ENCODE measurements at regions of chr17 and their contacts with region 1.

Region 1: GRCh38 chr17:9217151-9218056 is 196.1 kb downstream of the NTN1 start:
- DNase-seq: peak; percentile 62
- ATAC-seq: peak; percentile 91
- H3K4me3 ChIP-seq: no peak overlapping the region
- H3K27ac ChIP-seq: peak overlapping the region; percentile 79; the same call in 1 of the 2 replicates
- H3K4me1 ChIP-seq: peaks cover 6% of the 10 kb centered on the region; the same call in 1 of the 2 replicates
- H3K27me3 ChIP-seq: no peaks in the 10 kb centered on the region; the same call in 1 of the 2 replicates
- CTCF ChIP-seq: no peak
- POLR2A ChIP-seq: no peak
- RAD21 ChIP-seq: no peak

Region 2: DNA sequence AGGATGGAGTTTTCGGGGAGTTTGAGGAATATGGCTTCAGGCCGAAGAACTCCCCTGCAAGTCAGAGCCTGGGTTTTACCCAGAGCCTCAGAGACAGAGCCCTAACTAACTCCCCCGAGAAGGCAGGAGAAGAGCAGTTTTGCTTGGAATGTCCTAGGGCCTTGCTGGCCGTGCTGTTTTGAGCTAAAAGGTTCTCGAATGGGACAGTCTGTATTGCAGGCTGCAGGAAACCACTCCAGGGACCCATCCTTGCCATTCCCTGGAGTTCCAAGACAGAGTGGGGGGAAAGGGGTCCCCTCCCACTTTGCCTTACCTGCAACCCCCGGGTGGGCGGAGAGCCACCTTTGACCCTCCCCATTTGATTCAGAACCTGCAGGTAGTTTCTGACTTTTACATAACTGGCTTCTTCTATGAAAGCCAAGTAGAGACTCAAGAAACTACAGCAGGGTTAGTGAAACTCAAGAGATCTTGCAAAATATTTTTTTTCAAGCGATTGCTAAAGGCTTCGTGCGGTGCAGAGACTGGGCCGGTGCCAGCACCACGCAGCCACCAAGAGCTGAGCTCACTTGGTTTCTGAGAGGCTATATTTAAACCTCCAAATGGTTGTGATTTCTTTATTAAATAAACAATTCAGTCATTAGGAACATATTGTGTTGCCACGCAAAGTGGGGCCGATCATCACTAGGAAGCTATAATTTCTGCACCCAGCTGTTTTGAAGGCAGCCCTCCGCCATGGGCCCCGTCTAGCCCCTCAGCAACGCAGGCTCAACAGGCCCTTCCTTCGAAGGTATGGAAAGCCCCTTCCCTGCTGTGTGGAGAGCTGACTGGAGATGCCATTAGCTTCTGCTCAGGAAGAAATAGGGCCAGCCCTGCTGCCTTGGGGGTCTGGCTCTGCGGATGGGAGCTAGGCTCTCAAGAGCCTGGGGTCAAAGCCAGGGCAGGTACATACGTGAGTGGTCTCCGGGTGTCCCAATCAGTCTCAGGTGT is 27.0 kb after region 1 on chr17:
- CTCF ChIA-PET with region 1: no interaction called
- POLR2A ChIA-PET with region 1: no interaction called
- dilution Hi-C with region 1: no loop called
- in situ Hi-C with region 1: no loop called
- intact Hi-C with region 1: no loop called
- DNase-seq: peak; percentile 88
- ATAC-seq: peak; percentile 22
- H3K4me3 ChIP-seq: no peak overlapping the region
- H3K27ac ChIP-seq: peak overlapping the region; percentile 65; the same call in 1 of the 2 replicates
- H3K4me1 ChIP-seq: peaks cover 25% of the 10 kb centered on the region
- H3K27me3 ChIP-seq: no peaks in the 10 kb centered on the region
- CTCF ChIP-seq: no peak
- POLR2A ChIP-seq: no peak
- RAD21 ChIP-seq: no peak

Region 3: GRCh38 chr17:9273428-9274391 is 56.3 kb after region 1 on chr17:
- CTCF ChIA-PET with region 1: no interaction called
- POLR2A ChIA-PET with region 1: no interaction called
- dilution Hi-C with region 1: no loop called
- in situ Hi-C with region 1: no loop called
- intact Hi-C with region 1: loop called (anchors 10 kb)
- DNase-seq: peak; percentile 52
- ATAC-seq: peak; percentile 35
- H3K4me3 ChIP-seq: no peak overlapping the region
- H3K27ac ChIP-seq: no peak overlapping the region
- H3K4me1 ChIP-seq: peaks cover 2% of the 10 kb centered on the region; the same call in 1 of the 2 replicates
- H3K27me3 ChIP-seq: no peaks in the 10 kb centered on the region
- CTCF ChIP-seq: no peak
- POLR2A ChIP-seq: no peak
- RAD21 ChIP-seq: no peak